Activated T-helper 1 cell treated with anti-CD3 and anti-CD28 coated beads, Interleukin-12 subunit alpha, Interleukin-12 subunit beta, Interleukin-2, Interleukin-4 antibody, amounts not matched to agents 30 ng/mL and 10 ng/mL and 1 ng/mL, durations not matched to agents 14 hours and 24 hours and 36 hours (primary cell): ENCODE measurements at regions of chr4 and their contacts with region 1.

Region 1: DNA sequence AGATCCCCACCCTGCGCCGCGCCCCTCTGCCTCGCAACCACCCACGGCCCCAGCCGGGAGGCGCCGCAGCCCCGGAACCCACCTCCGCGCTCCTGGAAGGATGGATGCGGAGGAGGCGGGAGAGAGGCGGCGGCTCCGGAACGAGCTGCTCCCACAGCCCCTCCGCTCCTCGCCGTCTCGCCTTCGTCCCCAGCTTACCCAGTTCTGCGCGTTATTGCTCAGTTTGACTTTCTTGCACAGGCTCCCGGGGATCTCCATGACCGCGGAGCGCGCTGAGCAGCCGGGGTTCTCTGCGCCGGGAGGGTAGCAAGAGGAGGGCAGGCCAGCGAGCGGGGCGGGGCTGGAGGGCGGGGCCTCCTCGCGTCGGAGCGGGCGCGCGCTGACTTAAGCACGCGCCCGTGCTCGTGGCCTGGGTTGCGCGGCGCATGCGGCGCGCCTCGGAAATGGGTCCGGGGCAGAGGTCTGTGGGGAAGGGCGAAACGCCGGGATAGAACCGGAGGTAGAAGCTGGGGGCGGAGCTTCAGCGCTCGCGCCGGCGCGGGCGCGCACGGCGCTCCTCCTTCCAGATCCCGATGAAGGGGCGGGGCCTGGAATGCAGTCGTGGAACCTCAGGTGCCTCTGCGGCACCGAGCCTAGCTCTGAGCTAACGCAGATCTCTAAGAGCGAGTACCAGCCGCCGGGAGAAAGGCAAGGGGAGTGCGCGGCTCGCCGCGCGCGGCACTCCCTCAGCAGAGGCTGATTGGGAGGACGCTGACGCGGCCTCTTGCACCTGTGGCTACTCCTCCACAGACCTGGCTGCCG is at the start of gene PAPSS1:
- DNase-seq: peak; percentile 93
- H3K4me3 Mint-ChIP-seq: peak within 1 kb of the TSS; percentile 94
- H3K27ac Mint-ChIP-seq: peak within 1 kb of the TSS; percentile 90
- H3K4me1 Mint-ChIP-seq: peaks cover 33% of the 10 kb centered on the region
- H3K27me3 Mint-ChIP-seq: no peaks in the 10 kb centered on the region
- total RNA-seq, gene PAPSS1: 35.0 and 36.0 TPM in 2 replicates

Region 2: DNA sequence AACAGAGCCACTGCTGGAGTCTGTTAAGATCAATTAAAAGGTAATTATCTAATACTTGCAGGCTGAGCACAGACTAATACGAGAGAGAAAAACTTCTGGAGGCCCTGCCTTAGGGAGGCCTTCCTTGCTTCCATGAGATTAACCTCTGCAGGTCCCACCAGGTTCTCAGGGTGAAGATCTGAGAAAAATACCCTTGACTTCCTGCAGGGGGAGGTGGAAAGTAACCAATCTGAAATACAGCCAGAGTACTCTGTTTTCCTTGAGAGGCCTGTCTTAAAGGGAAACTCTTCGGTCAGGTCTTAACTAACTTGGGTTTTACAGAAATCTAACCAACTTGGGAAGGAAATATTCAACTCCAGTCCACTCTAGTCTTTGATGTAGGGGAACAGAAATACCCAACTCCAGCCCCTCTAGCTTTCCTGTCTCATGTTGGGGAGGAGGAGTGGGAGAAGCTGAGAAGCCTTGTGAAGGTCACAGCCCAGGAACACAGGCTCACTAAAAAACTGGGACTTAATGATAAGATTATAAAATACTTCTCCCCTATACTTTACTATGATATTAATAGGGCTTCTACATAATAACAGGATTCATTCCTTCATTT is 1481.2 kb before region 1 on chr4:
- intact Hi-C with region 1: no loop called
- DNase-seq: no peak
- H3K4me3 Mint-ChIP-seq: no peak overlapping the region
- H3K27ac Mint-ChIP-seq: no peak overlapping the region
- H3K4me1 Mint-ChIP-seq: no peaks in the 10 kb centered on the region
- H3K27me3 Mint-ChIP-seq: no peaks in the 10 kb centered on the region

Region 3: DNA sequence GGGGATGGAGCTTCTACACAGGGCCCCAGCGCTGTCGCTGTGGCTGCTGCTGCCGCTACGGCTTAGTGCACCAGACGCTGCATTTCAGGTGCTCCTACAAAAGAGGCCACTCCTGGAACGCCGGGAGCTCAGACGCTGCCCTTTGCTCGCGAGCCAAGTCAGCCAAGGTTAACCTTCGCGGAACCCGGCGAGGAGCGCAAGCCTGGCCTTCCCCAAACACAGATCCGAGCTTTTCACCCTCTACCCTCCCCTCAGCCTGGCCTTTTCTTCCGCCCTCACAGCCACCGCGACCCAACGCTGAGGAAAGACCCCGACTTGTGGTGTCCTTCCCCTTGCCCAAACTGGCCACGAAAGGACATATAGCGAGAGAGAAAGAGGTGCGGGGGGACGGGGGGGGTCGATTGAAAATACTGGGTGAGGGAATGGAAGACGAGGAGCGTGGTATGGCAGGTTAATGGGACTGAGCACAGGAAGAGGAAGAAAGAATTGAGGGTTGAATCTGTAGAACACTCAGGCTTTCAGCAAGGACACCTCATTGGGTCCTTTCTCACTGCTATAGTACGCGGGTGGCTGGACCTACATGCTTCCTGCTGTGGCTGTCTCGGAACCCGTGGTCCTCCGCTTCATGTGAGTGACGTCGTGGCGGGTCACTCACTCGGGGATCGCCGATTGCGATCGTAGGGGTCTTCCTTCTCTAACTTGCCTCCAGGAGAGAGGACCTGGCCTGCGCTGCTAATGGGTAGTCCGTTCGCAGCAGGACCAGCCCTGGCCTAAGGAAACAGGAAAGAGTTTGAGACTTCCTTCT is 1404.0 kb before region 1 on chr4 and contains the starts of genes AIMP1 and TBCK:
- intact Hi-C with region 1: loop called (anchors 5 kb)
- DNase-seq: peak; percentile 83
- H3K4me3 Mint-ChIP-seq: no peak within 1 kb of the TSS
- H3K27ac Mint-ChIP-seq: no peak within 1 kb of the TSS
- H3K4me1 Mint-ChIP-seq: peaks cover 30% of the 10 kb centered on the region
- H3K27me3 Mint-ChIP-seq: no peaks in the 10 kb centered on the region
- total RNA-seq, gene AIMP1: 86.4 and 86.9 TPM in 2 replicates
- total RNA-seq, gene TBCK: 24.4 and 25.1 TPM in 2 replicates

Region 4: GRCh38 chr4:107261228-107261874 is 458.8 kb before region 1 on chr4:
- intact Hi-C with region 1: no loop called
- DNase-seq: no peak
- H3K4me3 Mint-ChIP-seq: no peak overlapping the region
- H3K27ac Mint-ChIP-seq: no peak overlapping the region
- H3K4me1 Mint-ChIP-seq: no peaks in the 10 kb centered on the region
- H3K27me3 Mint-ChIP-seq: no peaks in the 10 kb centered on the region

Region 5: DNA sequence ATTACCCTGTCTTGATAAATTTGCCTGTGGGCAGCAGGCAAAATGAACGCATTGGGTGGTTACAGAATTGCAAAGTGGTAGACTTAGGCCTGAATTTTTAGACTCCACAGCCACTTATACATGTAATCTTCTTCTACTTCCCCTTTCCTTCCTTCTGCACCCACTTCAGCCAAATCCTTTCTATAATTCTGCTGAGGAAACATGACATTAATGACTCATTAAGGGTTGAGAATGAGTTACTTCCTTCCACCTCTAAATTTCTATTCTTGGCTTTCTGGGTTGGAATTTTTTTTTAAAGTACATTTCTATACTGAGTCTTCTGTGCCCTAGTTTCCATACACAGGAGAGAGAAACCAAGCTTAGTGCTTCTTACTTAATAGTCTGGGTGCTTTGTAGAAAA is 10.2 kb before region 1 on chr4:
- intact Hi-C with region 1: loop called (anchors 1 kb)
- DNase-seq: no peak
- H3K4me3 Mint-ChIP-seq: no peak overlapping the region
- H3K27ac Mint-ChIP-seq: no peak overlapping the region
- H3K4me1 Mint-ChIP-seq: peaks cover 13% of the 10 kb centered on the region
- H3K27me3 Mint-ChIP-seq: no peaks in the 10 kb centered on the region

Region 6: DNA sequence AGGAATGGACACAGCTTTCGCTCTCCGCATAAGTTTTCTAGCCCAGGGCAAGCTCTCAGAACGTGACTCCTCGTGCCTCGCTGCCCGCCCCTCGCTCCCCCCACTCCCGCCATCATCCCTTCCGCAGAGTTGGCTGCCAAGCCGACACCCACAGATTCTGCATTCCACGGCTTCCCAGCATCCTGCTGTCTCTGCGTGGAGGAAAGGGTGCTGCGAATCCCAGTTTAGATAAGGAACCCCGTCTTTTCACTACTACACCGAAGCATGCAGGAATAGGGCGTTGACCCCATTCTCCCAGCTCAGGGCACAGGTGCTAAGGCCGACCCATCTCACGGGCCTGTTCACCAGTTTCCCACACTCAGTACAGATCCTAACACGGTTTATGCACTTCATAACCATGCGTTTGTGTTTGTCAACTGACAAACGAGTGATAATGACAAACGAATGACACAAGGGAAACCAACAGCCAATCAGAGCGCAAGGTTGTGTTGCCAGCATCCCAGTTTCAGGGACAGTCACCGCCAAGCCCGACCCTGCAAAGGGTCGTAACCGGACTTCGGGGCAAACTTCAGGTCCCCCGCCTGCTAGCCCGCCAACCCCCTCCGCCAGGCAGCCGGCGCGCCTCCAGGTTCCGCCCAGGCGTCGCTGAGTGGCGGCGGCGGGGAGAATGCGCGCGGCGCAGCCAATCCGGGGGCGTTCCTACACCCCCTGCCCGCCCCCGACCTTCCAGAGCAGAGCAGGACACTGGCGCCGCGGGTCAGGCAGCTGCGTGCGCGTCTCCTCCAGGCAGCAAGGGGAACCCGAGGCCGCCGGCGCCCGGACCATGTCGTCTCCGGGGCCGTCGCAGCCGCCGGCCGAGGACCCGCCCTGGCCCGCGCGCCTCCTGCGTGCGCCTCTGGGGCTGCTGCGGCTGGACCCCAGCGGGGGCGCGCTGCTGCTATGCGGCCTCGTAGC is 211.0 kb after region 1 on chr4 and contains the start of gene CYP2U1:
- intact Hi-C with region 1: loop called (anchors 1 kb)
- DNase-seq: peak; percentile 81
- H3K4me3 Mint-ChIP-seq: peak within 1 kb of the TSS; percentile 86
- H3K27ac Mint-ChIP-seq: peak within 1 kb of the TSS; percentile 82
- H3K4me1 Mint-ChIP-seq: peaks cover 20% of the 10 kb centered on the region
- H3K27me3 Mint-ChIP-seq: peaks cover 2% of the 10 kb centered on the region
- total RNA-seq, gene CYP2U1: 1.1 and 1.5 TPM in 2 replicates

Region 7: GRCh38 chr4:108620101-108620932 is 900.2 kb after region 1 on chr4 and contains the start of gene RPL34:
- intact Hi-C with region 1: loop called (anchors 1 kb)
- DNase-seq: peak; percentile 96
- H3K4me3 Mint-ChIP-seq: peak within 1 kb of the TSS; percentile 98
- H3K27ac Mint-ChIP-seq: peak within 1 kb of the TSS; percentile 97
- H3K4me1 Mint-ChIP-seq: peaks cover 43% of the 10 kb centered on the region
- H3K27me3 Mint-ChIP-seq: no peaks in the 10 kb centered on the region
- total RNA-seq, gene RPL34: 1,258 and 1,304 TPM in 2 replicates

Region 8: DNA sequence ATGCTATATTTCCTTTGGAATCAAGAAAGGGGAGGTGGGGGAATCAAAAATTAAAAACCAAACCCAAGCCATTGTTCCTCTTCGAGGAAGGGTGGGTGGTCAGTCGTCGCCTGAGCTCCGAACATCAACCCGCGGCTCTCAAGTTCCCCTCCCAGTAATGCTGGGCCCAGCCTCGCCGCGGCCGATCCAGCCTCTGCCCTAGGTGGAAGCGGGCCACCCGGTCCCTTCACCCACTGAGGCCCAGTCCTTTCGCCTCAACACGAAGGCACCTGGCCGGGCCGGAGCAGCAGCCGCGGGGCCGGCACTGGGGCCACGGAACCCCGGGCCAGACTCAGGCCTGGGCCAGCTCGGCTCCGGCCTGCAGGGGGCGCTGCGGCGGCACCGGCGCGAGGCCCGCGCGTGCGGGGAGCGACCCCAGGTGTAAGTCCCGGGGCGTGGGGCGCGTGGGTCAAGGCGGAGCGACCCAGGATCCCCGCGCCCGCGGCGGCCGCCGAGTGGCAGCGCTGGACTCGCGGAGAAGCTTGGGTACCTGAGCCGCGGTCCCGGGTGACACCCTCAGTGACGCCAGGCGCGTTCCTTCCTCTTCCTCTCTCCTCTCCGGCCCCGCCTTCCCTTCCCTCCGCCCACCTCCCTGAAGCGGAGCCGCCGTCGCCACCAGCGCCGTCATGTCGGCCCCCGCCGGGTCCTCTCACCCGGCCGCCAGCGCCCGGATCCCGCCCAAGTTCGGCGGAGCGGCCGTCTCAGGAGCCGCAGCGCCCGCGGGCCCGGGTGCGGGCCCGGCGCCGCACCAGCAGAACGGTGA is 1713.3 kb after region 1 on chr4 and contains the start of gene SEC24B:
- intact Hi-C with region 1: loop called (anchors 2 kb)
- DNase-seq: peak; percentile 86
- H3K4me3 Mint-ChIP-seq: peak within 1 kb of the TSS; percentile 87
- H3K27ac Mint-ChIP-seq: peak within 1 kb of the TSS; percentile 79
- H3K4me1 Mint-ChIP-seq: peaks cover 57% of the 10 kb centered on the region
- H3K27me3 Mint-ChIP-seq: no peaks in the 10 kb centered on the region
- total RNA-seq, gene SEC24B: 32.5 and 34.0 TPM in 2 replicates